ENCODE measurements at regions of chr1 and their contacts with region 1.

Region 1: GRCh38 chr1:161766102-161766981 is at the start of gene ATF6:
- DNase-seq: peak; percentile 66 to 90 (median 74)
- ATAC-seq: peak; percentile 69
- H3K4me3 ChIP-seq: peak within 1 kb of the TSS; percentile 70
- H3K4me3 Mint-ChIP-seq: peak within 1 kb of the TSS; percentile 99
- H3K27ac ChIP-seq: peak within 1 kb of the TSS; percentile 76 to 86
- H3K27ac Mint-ChIP-seq: no peak within 1 kb of the TSS
- H3K4me1 ChIP-seq: peaks cover 29% of the 10 kb centered on the region
- H3K4me1 Mint-ChIP-seq: peaks cover 40% of the 10 kb centered on the region
- H3K27me3 ChIP-seq: no peaks in the 10 kb centered on the region
- H3K27me3 Mint-ChIP-seq: no peaks in the 10 kb centered on the region
- CTCF ChIP-seq: no peak
- total RNA-seq, gene ATF6: 16.2 to 17.1 TPM

Region 2: GRCh38 chr1:162040681-162041080 is 274.3 kb after region 1 on chr1:
- CTCF ChIA-PET with region 1: interaction called, 6 read pairs
- POLR2A ChIA-PET with region 1: no interaction called
- intact Hi-C with region 1: loop called (anchors 1 kb)
- DNase-seq: no peak
- ATAC-seq: no peak
- H3K4me3 ChIP-seq: no peak overlapping the region
- H3K4me3 Mint-ChIP-seq: no peak overlapping the region
- H3K27ac ChIP-seq: no peak overlapping the region
- H3K27ac Mint-ChIP-seq: no peak overlapping the region
- H3K4me1 ChIP-seq: peaks cover 5% of the 10 kb centered on the region
- H3K4me1 Mint-ChIP-seq: no peaks in the 10 kb centered on the region
- H3K27me3 ChIP-seq: peaks cover 0 to 11% of the 10 kb centered on the region in 2 experiments
- H3K27me3 Mint-ChIP-seq: peaks cover 5% of the 10 kb centered on the region
- CTCF ChIP-seq: no peak

Region 3: GRCh38 chr1:162502928-162503327 is 736.6 kb after region 1 on chr1:
- CTCF ChIA-PET with region 1: no interaction called
- POLR2A ChIA-PET with region 1: no interaction called
- intact Hi-C with region 1: loop called in 1 of 2 experiments (anchors 10 kb)
- DNase-seq: no peak
- ATAC-seq: no peak
- H3K4me3 ChIP-seq: no peak overlapping the region
- H3K4me3 Mint-ChIP-seq: no peak overlapping the region
- H3K27ac ChIP-seq: no peak overlapping the region
- H3K27ac Mint-ChIP-seq: no peak overlapping the region
- H3K4me1 ChIP-seq: peaks cover 12% of the 10 kb centered on the region
- H3K4me1 Mint-ChIP-seq: peaks cover 33% of the 10 kb centered on the region
- H3K27me3 ChIP-seq: no peaks in the 10 kb centered on the region
- H3K27me3 Mint-ChIP-seq: no peaks in the 10 kb centered on the region
- CTCF ChIP-seq: no peak